ENCODE measurements at regions of chr3 and their contacts with region 1.

Region 1: DNA sequence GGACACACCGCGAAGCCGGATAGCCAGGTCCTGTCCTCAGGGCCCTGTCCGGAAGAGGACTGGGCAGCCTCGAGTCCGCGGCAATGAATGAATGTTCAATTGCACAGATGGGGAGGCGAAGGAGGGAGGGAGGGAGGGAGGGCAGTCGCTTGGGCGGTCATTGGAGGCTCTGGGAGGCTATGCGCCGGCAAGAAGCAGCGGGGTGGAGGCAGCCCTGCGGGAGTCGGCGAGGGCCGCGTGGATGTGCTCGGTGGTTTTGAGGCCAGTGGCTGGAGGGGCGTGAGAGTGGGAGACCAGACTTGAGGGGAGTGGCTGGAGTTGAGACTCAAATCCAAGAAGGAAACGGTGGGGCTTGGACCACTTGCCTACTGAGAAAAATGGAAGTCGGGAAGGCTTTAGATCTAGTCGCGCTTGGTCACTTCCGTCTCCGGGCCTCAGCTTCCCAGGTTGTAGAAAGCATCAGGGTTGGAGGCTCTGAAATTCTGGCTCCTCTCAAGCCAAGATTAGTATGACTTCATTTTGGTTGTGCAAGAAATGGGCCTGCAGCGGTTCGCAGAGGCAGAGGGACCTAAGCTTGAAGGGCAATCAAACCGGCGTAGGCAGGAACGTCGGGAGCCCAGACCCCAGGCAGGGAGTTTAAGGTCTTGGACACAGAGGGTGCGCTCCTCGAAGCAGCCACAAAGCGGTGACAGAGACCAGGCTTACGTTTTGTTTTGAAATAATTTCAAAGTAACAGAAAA is 21.1 kb upstream of the PLXND1 start:
- DNase-seq: peak; percentile 86
- H3K4me3 Mint-ChIP-seq: peak overlapping the region; percentile 71
- H3K27ac Mint-ChIP-seq: peak overlapping the region; percentile 57
- H3K4me1 Mint-ChIP-seq: peaks cover 24% of the 10 kb centered on the region
- H3K27me3 Mint-ChIP-seq: no peaks in the 10 kb centered on the region
- CTCF ChIP-seq: peak; percentile 92

Region 2: DNA sequence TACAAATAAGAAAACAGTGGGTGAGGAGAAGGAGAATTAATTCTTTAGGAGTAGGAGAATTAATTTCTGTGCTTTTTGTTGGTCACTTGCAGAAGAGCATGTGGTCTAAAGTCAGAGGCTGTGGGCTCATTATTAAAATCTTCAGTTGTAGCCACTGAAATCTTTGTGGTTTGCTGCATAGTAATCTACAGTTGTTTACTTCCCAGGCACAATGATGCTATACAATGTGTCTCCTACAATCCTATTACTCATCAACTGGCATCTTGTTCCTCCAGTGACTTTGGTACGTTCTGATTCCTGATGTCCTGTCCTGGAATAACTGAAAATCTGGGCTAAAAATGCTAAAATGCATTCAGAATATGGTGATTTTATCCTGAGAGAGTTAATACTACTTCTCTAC is 166.6 kb before region 1 on chr3:
- CTCF ChIA-PET with region 1: no interaction called
- intact Hi-C with region 1: no loop called
- DNase-seq: no peak
- H3K4me3 Mint-ChIP-seq: no peak overlapping the region
- H3K27ac Mint-ChIP-seq: no peak overlapping the region
- H3K4me1 Mint-ChIP-seq: no peaks in the 10 kb centered on the region
- H3K27me3 Mint-ChIP-seq: no peaks in the 10 kb centered on the region
- CTCF ChIP-seq: no peak

Region 3: GRCh38 chr3:129650256-129650872 is 22.8 kb after region 1 on chr3:
- CTCF ChIA-PET with region 1: interaction called, 4 read pairs
- intact Hi-C with region 1: loop called (anchors 2 kb)
- DNase-seq: peak; percentile 84
- H3K4me3 Mint-ChIP-seq: no peak overlapping the region
- H3K27ac Mint-ChIP-seq: peak overlapping the region; percentile 63
- H3K4me1 Mint-ChIP-seq: peaks cover 42% of the 10 kb centered on the region
- H3K27me3 Mint-ChIP-seq: no peaks in the 10 kb centered on the region
- CTCF ChIP-seq: peak; percentile 83

Region 4: DNA sequence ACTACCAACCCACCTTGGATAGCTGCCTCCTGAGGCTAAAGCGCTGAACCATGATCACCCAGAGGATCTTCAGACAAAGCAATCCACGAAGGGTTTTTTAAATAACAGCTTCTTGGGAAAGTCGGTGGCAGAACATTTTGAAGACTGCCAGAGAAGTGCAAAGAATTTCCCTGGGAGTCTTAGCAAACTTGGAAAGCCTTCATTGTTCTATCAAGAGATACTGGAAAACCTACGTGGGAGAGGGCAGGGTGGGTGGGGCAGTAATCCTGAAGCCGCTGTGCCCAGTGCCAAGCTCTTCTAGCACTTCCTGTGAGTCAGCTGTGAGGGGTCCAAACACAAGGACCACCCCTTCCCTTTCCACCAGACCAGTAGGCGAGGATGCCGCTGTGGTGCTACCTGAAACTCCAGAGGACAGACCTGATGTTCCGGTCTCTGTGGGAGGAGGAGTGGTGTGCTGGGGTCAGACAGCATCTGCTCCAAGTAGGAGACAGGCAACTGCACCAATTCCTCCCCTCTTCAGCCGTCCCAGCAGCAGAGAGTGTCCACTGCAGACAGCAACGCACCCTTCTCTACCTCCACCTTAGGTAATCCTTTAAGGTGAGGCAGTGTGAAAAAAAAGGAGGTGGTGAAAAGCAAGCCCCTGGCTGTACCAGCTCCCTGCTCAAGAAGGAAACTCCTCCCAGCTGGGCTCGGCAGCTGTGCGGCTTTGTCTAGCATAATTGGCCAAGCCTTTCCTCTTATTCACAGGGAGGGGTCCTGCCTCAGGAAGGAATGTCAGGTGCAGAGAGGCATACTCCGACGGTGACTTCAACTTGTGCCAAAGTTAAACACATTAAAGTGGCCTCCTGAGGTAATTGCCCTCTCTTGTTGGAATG is 166.9 kb after region 1 on chr3:
- CTCF ChIA-PET with region 1: interaction called, 14 read pairs
- intact Hi-C with region 1: no loop called
- DNase-seq: peak; percentile 95
- H3K4me3 Mint-ChIP-seq: peak overlapping the region; percentile 86
- H3K27ac Mint-ChIP-seq: peak overlapping the region; percentile 57
- H3K4me1 Mint-ChIP-seq: peaks cover 52% of the 10 kb centered on the region
- H3K27me3 Mint-ChIP-seq: no peaks in the 10 kb centered on the region
- CTCF ChIP-seq: no peak

Region 5: GRCh38 chr3:129824926-129825541 is 197.4 kb after region 1 on chr3:
- CTCF ChIA-PET with region 1: interaction called, 16 read pairs
- intact Hi-C with region 1: loop called (anchors 1 kb)
- DNase-seq: peak; percentile 88
- H3K4me3 Mint-ChIP-seq: no peak overlapping the region
- H3K27ac Mint-ChIP-seq: peak overlapping the region; percentile 5
- H3K4me1 Mint-ChIP-seq: peaks cover 39% of the 10 kb centered on the region
- H3K27me3 Mint-ChIP-seq: no peaks in the 10 kb centered on the region
- CTCF ChIP-seq: peak; percentile 90

Region 6: GRCh38 chr3:130111185-130111864 is 483.7 kb after region 1 on chr3:
- CTCF ChIA-PET with region 1: interaction called, 3 read pairs
- intact Hi-C with region 1: loop called (anchors 10 kb)
- DNase-seq: peak; percentile 100
- H3K4me3 Mint-ChIP-seq: peak overlapping the region; percentile 93
- H3K27ac Mint-ChIP-seq: peak overlapping the region; percentile 79
- H3K4me1 Mint-ChIP-seq: peaks cover 27% of the 10 kb centered on the region
- H3K27me3 Mint-ChIP-seq: no peaks in the 10 kb centered on the region
- CTCF ChIP-seq: no peak

Measured in Calu3 (cell line).